GM12878 (cell line): ENCODE measurements at regions of chr2 and their contacts with region 1.

Region 1: GRCh38 chr2:10408649-10409579 is 39.2 kb downstream of the ODC1 start:
- DNase-seq: peak; percentile 71
- ATAC-seq: peak; percentile 84
- H3K4me3 ChIP-seq: peak overlapping the region; percentile 58; the same call in 1 of the 2 replicates
- H3K27ac ChIP-seq: peak overlapping the region; percentile 84
- H3K4me1 ChIP-seq: peaks cover 44% of the 10 kb centered on the region
- H3K27me3 ChIP-seq: no peaks in the 10 kb centered on the region
- CTCF ChIP-seq: peak; percentile 95 to 99 (median 99); a peak in 5 of 6 replicates
- EP300 ChIP-seq: no peak; a peak in 1 of 4 replicates
- POLR2A ChIP-seq: no peak
- RAD21 ChIP-seq: peak; percentile 87

Region 2: DNA sequence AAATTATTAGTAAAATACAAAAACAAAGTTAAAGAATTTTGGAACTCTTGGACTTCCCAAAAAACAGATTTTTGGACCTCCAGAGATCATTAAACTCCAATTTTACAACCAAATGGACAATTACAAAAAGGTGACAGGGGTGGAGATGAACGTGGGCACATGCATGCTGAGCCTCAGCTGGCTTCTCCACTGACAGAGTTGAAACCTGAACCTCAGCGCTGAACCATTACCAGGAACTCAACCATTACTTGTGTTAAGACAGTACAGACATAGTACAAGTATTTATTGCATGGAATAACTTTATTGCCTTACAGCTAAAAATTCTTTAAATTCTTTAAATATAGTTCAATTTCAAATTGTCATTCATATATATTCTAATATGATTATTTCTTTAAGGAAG is 1538.5 kb before region 1 on chr2:
- CTCF ChIA-PET with region 1: no interaction called
- POLR2A ChIA-PET with region 1: no interaction called
- RAD21 ChIA-PET with region 1: no interaction called
- SMC1A ChIA-PET with region 1: no interaction called
- in situ Hi-C with region 1: no loop called
- intact Hi-C with region 1: no loop called
- DNase-seq: no peak
- ATAC-seq: no peak
- H3K4me3 ChIP-seq: no peak overlapping the region
- H3K27ac ChIP-seq: no peak overlapping the region
- H3K4me1 ChIP-seq: peaks cover 10% of the 10 kb centered on the region; the same call in 1 of the 2 replicates
- H3K27me3 ChIP-seq: no peaks in the 10 kb centered on the region
- CTCF ChIP-seq: no peak
- EP300 ChIP-seq: no peak
- POLR2A ChIP-seq: no peak
- RAD21 ChIP-seq: no peak

Region 3: GRCh38 chr2:10072656-10073480 is 336.0 kb before region 1 on chr2:
- CTCF ChIA-PET with region 1: interaction called, 92 read pairs
- POLR2A ChIA-PET with region 1: interaction called, 7 read pairs
- RAD21 ChIA-PET with region 1: interaction called, 44 read pairs
- SMC1A ChIA-PET with region 1: interaction called, 34 read pairs
- in situ Hi-C with region 1: no loop called
- intact Hi-C with region 1: loop called (anchors 1 kb)
- DNase-seq: no peak
- ATAC-seq: peak; percentile 96
- H3K4me3 ChIP-seq: no peak overlapping the region
- H3K27ac ChIP-seq: no peak overlapping the region
- H3K4me1 ChIP-seq: peaks cover 21% of the 10 kb centered on the region
- H3K27me3 ChIP-seq: no peaks in the 10 kb centered on the region
- CTCF ChIP-seq: peak; percentile 84 to 94 (median 86); a peak in 5 of 6 replicates
- EP300 ChIP-seq: no peak
- POLR2A ChIP-seq: no peak
- RAD21 ChIP-seq: peak; percentile 92

Region 4: GRCh38 chr2:10122386-10123280 is 286.3 kb before region 1 on chr2 and contains the start of gene RRM2:
- CTCF ChIA-PET with region 1: interaction called, 124 read pairs
- POLR2A ChIA-PET with region 1: interaction called, 31 read pairs
- RAD21 ChIA-PET with region 1: interaction called, 181 read pairs
- SMC1A ChIA-PET with region 1: interaction called, 97 read pairs
- in situ Hi-C with region 1: no loop called
- intact Hi-C with region 1: loop called (anchors 1 kb)
- DNase-seq: peak; percentile 65
- ATAC-seq: peak; percentile 81
- H3K4me3 ChIP-seq: peak within 1 kb of the TSS; percentile 71
- H3K27ac ChIP-seq: peak within 1 kb of the TSS; percentile 98
- H3K4me1 ChIP-seq: peaks cover 5% of the 10 kb centered on the region
- H3K27me3 ChIP-seq: no peaks in the 10 kb centered on the region
- CTCF ChIP-seq: no peak
- EP300 ChIP-seq: no peak
- POLR2A ChIP-seq: peak; percentile 99
- RAD21 ChIP-seq: no peak
- polyA plus RNA-seq, gene RRM2: 54.4 to 64.5 TPM

Region 5: GRCh38 chr2:10157293-10157692 is 251.6 kb before region 1 on chr2:
- CTCF ChIA-PET with region 1: interaction called, 20 read pairs
- POLR2A ChIA-PET with region 1: interaction called, 3 read pairs
- RAD21 ChIA-PET with region 1: interaction called, 12 read pairs
- SMC1A ChIA-PET with region 1: interaction called, 13 read pairs
- in situ Hi-C with region 1: no loop called
- intact Hi-C with region 1: no loop called
- DNase-seq: no peak
- ATAC-seq: 0 out of 3 replicates have a peak, but pooled peaks have one; percentile 31
- H3K4me3 ChIP-seq: no peak overlapping the region
- H3K27ac ChIP-seq: no peak overlapping the region
- H3K4me1 ChIP-seq: no peaks in the 10 kb centered on the region
- H3K27me3 ChIP-seq: no peaks in the 10 kb centered on the region
- CTCF ChIP-seq: no peak
- EP300 ChIP-seq: no peak
- POLR2A ChIP-seq: no peak
- RAD21 ChIP-seq: no peak

Region 6: DNA sequence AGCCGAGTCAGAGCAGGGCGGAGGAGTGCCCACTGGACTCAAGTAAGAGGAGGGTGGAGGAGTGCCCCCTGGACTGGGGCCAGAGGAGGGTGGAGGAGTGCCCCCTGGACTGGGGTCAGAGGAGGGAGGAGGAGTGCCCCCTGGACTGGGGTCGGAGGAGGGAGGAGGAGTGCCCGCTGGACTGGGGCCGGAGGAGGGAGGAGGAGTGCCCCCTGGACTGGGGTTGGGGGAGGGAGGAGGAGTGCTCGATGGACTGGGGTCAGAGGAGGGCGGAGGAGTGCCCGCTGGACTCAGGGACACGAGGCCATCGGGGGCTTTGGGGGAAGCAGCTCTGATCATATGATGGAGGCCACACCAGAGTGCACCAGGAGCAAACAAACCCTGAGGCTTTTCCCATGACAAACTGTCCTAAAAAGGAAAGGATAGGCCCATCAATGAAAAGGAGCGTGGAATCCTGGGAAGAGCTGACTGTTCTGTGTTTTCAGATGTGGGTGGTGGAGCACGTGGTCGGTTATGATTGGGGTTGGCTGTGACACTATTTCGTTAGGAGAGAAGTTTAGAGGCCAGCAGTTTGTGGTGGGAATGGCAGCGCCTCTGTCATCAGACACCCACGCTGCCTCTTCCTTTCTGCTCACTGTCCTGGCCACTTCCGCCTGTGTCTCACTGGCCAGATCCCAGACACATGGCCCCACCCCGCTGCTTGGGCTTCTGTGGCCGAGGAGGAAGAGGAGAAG is 130.7 kb before region 1 on chr2:
- CTCF ChIA-PET with region 1: interaction called, 27 read pairs
- POLR2A ChIA-PET with region 1: no interaction called
- RAD21 ChIA-PET with region 1: interaction called, 18 read pairs
- SMC1A ChIA-PET with region 1: interaction called, 17 read pairs
- in situ Hi-C with region 1: no loop called
- intact Hi-C with region 1: no loop called
- DNase-seq: no peak
- ATAC-seq: peak; percentile 74
- H3K4me3 ChIP-seq: no peak overlapping the region
- H3K27ac ChIP-seq: no peak overlapping the region
- H3K4me1 ChIP-seq: peaks cover 2% of the 10 kb centered on the region; the same call in 1 of the 2 replicates
- H3K27me3 ChIP-seq: no peaks in the 10 kb centered on the region; a peak in 1 of 4 replicates
- CTCF ChIP-seq: no peak
- EP300 ChIP-seq: no peak
- POLR2A ChIP-seq: no peak
- RAD21 ChIP-seq: no peak

Region 7: GRCh38 chr2:10331027-10331701 is 77.8 kb before region 1 on chr2:
- CTCF ChIA-PET with region 1: interaction called, 40 read pairs
- POLR2A ChIA-PET with region 1: interaction called, 11 read pairs
- RAD21 ChIA-PET with region 1: interaction called, 76 read pairs
- SMC1A ChIA-PET with region 1: interaction called, 69 read pairs
- in situ Hi-C with region 1: no loop called
- intact Hi-C with region 1: no loop called
- DNase-seq: peak; percentile 40
- ATAC-seq: peak; percentile 76
- H3K4me3 ChIP-seq: peak overlapping the region; percentile 62; the same call in 1 of the 2 replicates
- H3K27ac ChIP-seq: no peak overlapping the region; the same call in 1 of the 2 replicates
- H3K4me1 ChIP-seq: peaks cover 23% of the 10 kb centered on the region
- H3K27me3 ChIP-seq: no peaks in the 10 kb centered on the region
- CTCF ChIP-seq: no peak; a peak in 1 of 6 replicates
- EP300 ChIP-seq: no peak
- POLR2A ChIP-seq: peak; percentile 59
- RAD21 ChIP-seq: no peak

Region 8: DNA sequence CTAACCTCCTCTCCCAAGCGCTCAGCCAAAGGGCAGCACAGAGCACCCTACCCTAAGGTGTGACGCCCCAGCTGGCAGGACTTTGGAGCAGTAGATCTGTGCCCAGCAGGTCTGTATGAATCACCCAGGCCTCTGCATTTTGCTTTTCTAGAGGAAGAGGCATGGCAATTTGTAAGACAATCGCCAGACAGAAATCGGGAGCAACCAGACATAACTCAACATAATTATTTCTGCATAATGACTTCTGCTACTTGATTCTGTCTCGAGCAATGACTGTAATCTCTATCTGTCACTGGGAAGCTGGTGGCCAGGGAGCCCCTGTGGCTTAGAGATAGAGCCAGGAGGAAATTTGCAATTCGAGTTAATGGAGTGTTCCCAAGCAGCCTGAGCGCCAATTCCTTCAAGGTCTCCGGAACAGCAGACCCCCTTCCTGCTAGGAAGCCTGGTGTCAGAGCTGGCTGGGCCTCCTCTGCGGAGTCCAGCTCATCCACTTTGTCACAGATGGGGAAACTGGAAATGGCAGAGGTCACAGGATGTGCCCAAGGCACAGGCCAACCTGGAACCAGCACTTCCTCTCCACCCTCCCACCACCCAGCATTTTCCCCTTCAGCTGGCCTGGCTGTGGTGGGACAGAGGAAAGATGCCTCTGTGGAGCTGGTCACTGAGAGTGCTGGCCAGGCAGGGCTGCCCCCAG is 15.8 kb before region 1 on chr2:
- CTCF ChIA-PET with region 1: interaction called, 5 read pairs
- POLR2A ChIA-PET with region 1: interaction called, 3 read pairs
- RAD21 ChIA-PET with region 1: no interaction called
- SMC1A ChIA-PET with region 1: interaction called, 12 read pairs
- in situ Hi-C with region 1: no loop called
- intact Hi-C with region 1: no loop called
- DNase-seq: no peak
- ATAC-seq: no peak
- H3K4me3 ChIP-seq: no peak overlapping the region
- H3K27ac ChIP-seq: no peak overlapping the region
- H3K4me1 ChIP-seq: no peaks in the 10 kb centered on the region
- H3K27me3 ChIP-seq: no peaks in the 10 kb centered on the region
- CTCF ChIP-seq: no peak
- EP300 ChIP-seq: no peak
- POLR2A ChIP-seq: no peak
- RAD21 ChIP-seq: no peak